Activated CD4-positive, alpha-beta T cell treated with anti-CD3 and anti-CD28 coated beads, Interleukin-2, amount 10 ng/mL, durations not matched to agents 24 days and 14 days (primary cell): ENCODE measurements at regions of chr2 and their contacts with region 1.

Region 1: GRCh38 chr2:32356735-32357644 is at the start of gene BIRC6:
- DNase-seq: peak; percentile 98
- H3K4me3 Mint-ChIP-seq: peak within 1 kb of the TSS; percentile 92
- H3K27ac Mint-ChIP-seq: peak within 1 kb of the TSS; percentile 96
- H3K4me1 Mint-ChIP-seq: peaks cover 31% of the 10 kb centered on the region
- H3K27me3 Mint-ChIP-seq: no peaks in the 10 kb centered on the region
- total RNA-seq, gene BIRC6: 101 and 105 TPM in 2 replicates

Region 2: DNA sequence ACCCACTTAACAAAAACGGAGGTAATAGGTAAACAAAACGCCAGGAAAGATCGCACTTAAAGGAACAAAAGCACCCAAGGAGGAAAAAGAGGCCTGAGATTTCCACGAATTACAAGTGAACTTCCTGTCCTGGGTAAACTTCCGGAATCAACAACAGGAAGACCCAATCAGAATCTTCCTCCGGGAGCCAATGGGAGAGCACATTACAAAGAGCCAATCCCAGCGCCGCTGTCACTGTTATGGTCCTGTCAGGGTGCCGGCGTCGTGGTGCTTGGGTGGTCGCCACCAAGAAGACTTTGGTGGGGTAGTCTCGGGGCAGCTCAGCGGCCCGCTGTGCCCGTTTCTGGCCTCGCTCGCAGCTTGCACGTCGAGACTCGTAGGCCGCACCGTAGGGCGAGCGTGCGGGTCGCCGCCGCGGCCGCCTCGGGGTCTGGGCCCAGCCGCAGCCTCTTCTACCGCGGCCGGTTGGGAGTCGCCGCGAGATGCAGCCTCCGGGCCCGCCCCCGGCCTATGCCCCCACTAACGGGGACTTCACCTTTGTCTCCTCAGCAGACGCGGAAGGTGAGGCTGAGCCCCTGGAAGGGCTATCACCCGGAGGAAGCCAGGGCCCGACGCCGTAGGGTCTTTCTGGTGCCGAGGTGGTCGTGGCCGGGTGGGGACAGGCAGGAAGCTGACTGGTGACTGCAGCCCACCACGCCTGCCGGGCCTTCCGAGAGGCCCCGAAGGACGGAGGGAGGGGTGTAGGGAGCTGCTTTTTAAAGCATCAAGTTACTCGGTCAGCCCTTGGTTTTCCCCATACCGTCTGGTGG is 79.1 kb before region 1 on chr2 and contains the start of gene YIPF4:
- intact Hi-C with region 1: loop called (anchors 1 kb)
- DNase-seq: peak; percentile 97
- H3K4me3 Mint-ChIP-seq: peak within 1 kb of the TSS; percentile 92
- H3K27ac Mint-ChIP-seq: peak within 1 kb of the TSS; percentile 89
- H3K4me1 Mint-ChIP-seq: peaks cover 18% of the 10 kb centered on the region
- H3K27me3 Mint-ChIP-seq: peaks cover 7% of the 10 kb centered on the region
- total RNA-seq, gene YIPF4: 34.5 and 37.9 TPM in 2 replicates